Activated CD4-positive, alpha-beta T cell treated with anti-CD3 and anti-CD28 coated beads, Interleukin-2, amount 10 ng/mL, durations not matched to agents 24 days and 14 days (primary cell): ENCODE measurements at regions of chr19 and their contacts with region 1.

Region 1: DNA sequence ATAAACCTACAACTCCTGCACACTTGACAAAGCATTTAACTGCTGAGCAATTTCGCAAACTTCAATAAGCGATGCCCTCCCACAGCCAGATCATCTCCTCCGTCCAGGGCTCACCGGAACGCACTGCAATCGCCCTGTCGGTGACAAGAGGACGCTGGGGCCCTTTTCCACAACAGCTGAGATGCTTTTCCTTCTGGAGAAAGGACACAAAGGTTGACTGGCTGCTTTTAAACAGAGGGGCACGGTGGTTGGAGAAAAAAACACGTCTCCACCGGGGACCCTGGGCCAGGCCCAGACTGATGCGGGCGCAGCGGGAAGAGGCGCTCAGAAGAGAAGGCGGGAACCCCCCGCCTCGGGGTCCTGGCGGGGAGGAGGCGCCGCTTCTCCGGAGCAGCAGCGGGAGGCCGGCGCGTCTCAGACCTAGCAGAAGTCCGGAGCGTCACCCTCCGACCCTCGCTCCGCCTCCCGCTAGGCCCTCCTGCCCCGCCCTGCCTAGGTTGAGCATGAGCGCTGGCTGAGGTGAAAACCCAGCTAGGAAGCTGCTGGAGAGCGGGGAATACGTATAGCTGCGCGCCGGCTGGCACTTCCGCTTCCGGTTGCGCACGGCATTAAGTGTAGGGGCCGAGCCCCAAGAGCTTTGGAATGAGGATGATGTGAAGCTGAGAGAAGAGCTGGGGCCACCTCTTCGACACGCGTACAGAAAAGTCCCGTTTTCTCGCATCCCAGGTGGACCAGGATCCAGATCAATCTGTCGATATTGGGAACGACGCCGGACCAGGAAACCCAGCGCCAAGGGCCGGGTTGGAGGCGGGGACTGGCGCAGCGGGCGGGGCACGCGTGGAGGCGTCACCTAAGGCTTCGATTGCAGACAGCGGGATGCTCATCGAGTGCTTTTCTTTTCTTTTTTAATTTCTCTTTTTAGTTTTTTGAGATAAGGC is at the start of gene ZNF846:
- DNase-seq: peak; percentile 98
- H3K4me3 Mint-ChIP-seq: peak within 1 kb of the TSS; percentile 98
- H3K27ac Mint-ChIP-seq: peak within 1 kb of the TSS; percentile 97
- H3K4me1 Mint-ChIP-seq: peaks cover 7% of the 10 kb centered on the region
- H3K27me3 Mint-ChIP-seq: no peaks in the 10 kb centered on the region
- total RNA-seq, gene ZNF846: 2.2 and 3.4 TPM in 2 replicates

Region 2: GRCh38 chr19:9435279-9436268 is 332.9 kb before region 1 on chr19 and contains the start of gene ZNF266:
- intact Hi-C with region 1: loop called (anchors 1 kb)
- DNase-seq: peak; percentile 98
- H3K4me3 Mint-ChIP-seq: peak within 1 kb of the TSS; percentile 96
- H3K27ac Mint-ChIP-seq: peak within 1 kb of the TSS; percentile 99
- H3K4me1 Mint-ChIP-seq: peaks cover 22% of the 10 kb centered on the region
- H3K27me3 Mint-ChIP-seq: no peaks in the 10 kb centered on the region
- total RNA-seq, gene ZNF266: 24.9 and 25.3 TPM in 2 replicates

Region 3: DNA sequence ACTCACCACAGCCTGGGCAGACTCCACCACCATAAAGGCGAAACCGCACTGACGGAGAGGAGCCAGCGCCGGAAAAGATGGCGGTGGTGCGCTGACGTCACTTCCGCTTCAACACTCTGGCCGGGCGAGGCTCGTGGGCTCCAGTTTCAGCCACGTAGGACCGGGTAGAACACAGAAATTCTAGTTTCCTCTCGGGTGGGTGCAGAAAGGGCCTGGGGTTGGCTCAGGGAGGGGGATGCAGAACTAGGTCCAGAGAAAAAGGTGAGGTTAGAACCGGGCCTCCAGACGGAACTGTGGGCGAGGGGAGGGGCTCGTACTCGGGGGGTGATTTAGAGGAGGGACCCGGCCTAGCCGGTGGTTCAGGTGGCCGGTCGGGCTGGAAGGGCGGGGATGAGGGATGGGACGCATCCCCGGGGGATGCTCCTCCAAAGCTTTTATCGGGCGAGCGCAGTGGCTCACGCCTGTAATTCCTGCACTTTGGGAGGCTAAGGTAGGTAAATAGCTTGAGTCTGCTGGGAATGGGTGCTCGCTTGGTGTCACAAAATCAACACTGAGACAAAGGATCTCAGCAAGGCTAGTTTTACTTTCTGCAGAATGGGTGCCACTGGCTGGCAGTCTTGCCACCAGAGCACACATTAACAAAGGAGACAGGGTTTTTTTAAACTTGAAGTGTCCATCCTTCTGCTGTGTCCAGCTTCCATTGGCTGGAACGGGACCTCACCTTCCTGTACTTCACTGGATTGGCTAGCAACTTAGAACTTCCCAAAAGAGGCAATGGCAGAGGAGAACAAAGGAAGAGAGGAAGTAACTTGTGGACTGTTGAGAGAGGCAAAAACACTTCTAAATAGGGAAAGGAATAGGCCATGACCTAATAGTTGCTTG is 147.0 kb before region 1 on chr19 and contains the start of gene ZNF561:
- intact Hi-C with region 1: loop called (anchors 1 kb)
- DNase-seq: peak; percentile 96
- H3K4me3 Mint-ChIP-seq: peak within 1 kb of the TSS; percentile 97
- H3K27ac Mint-ChIP-seq: peak within 1 kb of the TSS; percentile 98
- H3K4me1 Mint-ChIP-seq: peaks cover 23% of the 10 kb centered on the region
- H3K27me3 Mint-ChIP-seq: peaks cover 2% of the 10 kb centered on the region
- total RNA-seq, gene ZNF561: 35.3 and 37.2 TPM in 2 replicates

Region 4: DNA sequence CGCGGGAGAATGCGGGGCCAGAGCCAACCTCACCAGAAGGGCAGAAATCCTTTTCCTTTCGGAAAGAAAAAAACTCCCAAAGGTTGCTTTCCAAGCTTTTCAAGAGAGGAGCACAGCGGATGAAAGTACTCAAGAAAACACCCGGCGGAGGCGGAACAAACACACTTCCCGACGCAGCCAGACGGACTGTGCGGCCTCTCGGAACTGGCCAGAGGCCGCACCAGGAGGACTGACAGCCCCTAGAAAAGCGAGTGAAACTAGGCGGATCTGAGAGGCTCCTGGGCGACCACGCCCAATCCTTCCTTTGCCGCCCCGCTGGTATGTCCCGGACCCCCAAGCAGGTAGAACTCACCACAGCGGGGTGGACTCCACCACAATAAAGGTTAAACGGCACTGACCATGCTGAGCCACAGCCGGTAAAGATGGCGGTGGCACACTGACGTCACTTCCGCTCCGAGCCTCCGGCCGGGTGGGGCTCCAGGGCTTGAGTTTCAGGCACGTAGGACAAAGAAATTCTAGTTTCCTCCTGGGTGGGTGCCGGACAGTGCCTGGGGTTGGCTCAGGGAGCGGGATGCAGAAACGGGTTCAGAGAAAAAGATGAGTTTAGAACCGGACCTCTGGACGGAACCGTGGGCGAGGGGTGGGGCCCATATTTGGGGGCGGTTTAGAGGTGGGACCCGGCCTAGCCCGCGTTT is 93.6 kb before region 1 on chr19 and contains the start of gene ZNF562:
- intact Hi-C with region 1: loop called (anchors 10 kb)
- DNase-seq: peak; percentile 91
- H3K4me3 Mint-ChIP-seq: peak within 1 kb of the TSS; percentile 92
- H3K27ac Mint-ChIP-seq: peak within 1 kb of the TSS; percentile 97
- H3K4me1 Mint-ChIP-seq: peaks cover 8% of the 10 kb centered on the region
- H3K27me3 Mint-ChIP-seq: peaks cover 2% of the 10 kb centered on the region
- total RNA-seq, gene ZNF562: 15.9 and 16.9 TPM in 2 replicates

Region 5: DNA sequence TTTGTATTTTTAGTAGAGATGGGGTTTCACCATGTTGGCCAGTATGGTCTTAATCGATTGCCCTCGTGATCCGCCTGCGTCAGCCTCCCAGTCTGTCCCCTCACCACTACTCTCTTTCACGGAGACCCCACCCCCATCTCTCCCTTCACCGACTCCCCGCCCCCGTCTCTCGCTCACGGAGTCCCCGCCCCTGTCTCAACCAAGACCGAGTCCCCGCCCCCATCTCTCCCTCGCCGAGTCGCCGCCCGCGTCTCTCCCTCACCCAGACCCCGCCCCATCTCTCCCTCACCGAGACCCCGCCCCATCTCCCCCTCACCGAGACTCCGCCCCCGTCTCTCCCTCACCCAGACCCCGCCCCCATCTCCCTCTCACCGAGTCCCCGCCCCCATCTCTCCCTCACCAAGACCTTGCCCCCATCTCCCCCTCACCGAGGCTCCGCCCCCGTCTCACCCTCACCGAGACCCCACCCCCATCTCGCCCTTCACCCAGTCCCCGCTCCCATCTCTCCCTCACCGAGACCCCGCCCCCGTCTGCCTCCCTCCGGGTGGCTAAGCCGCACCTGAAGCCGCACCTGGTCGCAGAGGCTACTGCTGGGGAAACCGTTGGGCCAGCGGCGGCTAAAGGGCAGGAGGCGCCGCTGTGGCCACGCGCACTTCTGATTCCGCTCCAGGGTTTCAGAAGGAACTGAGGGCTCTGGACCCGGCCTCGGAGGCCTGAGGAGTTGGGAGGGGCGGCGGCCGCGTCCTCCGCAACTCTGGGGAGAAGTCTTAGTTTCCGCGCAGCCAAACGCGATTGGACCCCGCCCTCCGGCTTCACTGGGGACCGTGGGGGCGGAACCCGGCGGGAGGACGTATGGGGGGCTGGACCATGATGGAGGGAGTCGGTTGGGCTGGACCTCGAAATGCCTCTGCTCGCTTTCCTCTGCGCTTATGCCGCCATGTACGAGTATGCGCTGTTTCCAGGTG is 17.2 kb after region 1 on chr19:
- intact Hi-C with region 1: loop called (anchors 1 kb)
- DNase-seq: peak; percentile 97
- H3K4me3 Mint-ChIP-seq: peak overlapping the region; percentile 90
- H3K27ac Mint-ChIP-seq: peak overlapping the region; percentile 94
- H3K4me1 Mint-ChIP-seq: peaks cover 19% of the 10 kb centered on the region
- H3K27me3 Mint-ChIP-seq: no peaks in the 10 kb centered on the region

Region 6: DNA sequence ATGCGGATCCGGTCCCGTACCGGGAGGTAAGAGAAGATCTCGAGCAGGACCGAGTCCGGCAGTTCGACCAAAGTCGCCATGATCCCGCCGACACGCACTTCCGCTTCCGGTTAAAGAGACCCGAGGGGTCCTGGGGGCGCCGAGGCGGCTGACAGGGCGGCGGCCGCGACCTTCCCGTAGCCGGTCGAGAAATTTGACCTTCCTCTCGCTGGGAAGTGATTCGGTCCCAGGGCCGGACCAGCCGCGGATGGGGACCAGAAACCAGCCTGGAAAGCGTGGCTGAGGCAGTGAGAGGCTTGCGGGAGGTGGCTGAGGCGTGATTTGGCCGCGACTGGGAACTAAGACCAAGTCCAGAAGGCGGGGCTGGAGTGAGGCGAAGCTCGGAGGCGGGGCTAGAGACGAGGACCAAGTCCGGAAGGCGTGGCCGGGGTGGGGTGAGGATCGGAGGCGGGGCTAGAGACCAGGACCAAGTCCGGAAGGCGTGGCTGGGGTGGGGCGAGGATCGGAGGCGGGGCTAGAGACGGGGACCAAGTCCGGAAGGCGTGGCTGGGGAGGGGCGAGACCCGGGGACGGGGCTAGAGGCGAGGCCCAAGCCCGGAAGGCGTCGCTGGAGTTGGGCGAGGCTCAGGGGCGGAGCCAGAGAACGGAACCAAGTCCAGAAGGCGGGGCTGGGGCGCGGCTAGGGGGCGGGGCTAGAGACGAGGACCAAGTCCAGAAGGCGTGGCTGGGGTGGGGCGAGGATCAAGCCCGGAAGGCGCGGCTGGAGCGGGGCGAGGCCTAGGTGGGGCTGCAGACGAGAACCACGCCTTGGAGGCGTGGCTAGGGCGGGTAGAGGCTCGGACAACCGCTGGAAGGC is 50.5 kb after region 1 on chr19 and contains the start of gene FBXL12:
- intact Hi-C with region 1: loop called (anchors 1 kb)
- DNase-seq: peak; percentile 100
- H3K4me3 Mint-ChIP-seq: peak within 1 kb of the TSS; percentile 93
- H3K27ac Mint-ChIP-seq: peak within 1 kb of the TSS; percentile 94
- H3K4me1 Mint-ChIP-seq: peaks cover 22% of the 10 kb centered on the region
- H3K27me3 Mint-ChIP-seq: no peaks in the 10 kb centered on the region
- total RNA-seq, gene FBXL12: 19.4 and 23.3 TPM in 2 replicates

Region 7: GRCh38 chr19:10052602-10053360 is 284.3 kb after region 1 on chr19:
- intact Hi-C with region 1: no loop called
- DNase-seq: no peak
- H3K4me3 Mint-ChIP-seq: no peak overlapping the region
- H3K27ac Mint-ChIP-seq: no peak overlapping the region
- H3K4me1 Mint-ChIP-seq: no peaks in the 10 kb centered on the region
- H3K27me3 Mint-ChIP-seq: peaks cover 1% of the 10 kb centered on the region